ENCODE measurements at regions of chr9 and their contacts with region 1.

Region 1: DNA sequence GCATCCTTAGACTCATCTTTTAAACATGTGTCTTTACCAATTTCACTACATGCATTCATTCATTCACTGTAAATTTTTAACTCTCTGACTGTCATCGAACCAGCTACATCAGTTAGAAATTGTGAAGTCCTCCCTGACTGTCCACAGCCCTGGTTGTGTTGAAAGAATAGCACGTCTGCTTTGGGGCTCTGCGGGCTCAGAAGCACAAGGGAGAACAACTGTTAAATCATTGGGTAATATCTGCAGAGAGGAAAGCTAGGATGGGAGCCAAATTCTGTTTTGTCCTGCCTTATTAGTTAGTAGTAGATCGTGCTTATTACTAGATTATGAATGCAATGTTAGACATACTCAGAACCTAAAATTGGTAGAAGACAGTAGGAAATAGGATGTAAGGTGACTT is 26.3 kb upstream of the FAM120AOS start:
- DNase-seq: no peak
- H3K4me3 ChIP-seq: no peak overlapping the region
- H3K27ac ChIP-seq: no peak overlapping the region
- H3K4me1 ChIP-seq: no peaks in the 10 kb centered on the region
- H3K27me3 ChIP-seq: no peaks in the 10 kb centered on the region
- CTCF ChIP-seq: no peak

Region 2: DNA sequence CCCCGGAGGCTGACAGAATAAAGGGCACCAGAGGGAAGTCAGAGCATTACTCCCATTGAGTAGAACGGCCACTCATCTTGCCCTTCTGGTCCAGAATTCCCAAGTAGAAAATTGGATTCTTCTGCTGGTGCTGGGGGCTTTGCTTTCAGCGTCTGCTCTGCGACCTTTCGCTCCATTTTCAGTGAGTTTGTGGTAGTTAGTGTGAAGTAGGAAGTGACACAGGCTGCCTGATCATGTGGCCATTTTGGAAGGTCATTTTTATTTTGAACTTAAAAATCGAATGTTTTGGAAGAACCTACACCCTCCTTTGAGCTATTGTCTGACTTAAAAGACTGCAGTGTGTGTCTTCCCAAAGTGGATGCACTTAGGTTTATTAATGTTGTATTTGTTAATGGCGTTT is 30.3 kb after region 1 on chr9:
- CTCF ChIA-PET with region 1: no interaction called
- dilution Hi-C with region 1: loop called (anchors 5 kb)
- in situ Hi-C with region 1: no loop called
- intact Hi-C with region 1: no loop called
- DNase-seq: no peak
- H3K4me3 ChIP-seq: no peak overlapping the region
- H3K27ac ChIP-seq: no peak overlapping the region
- H3K4me1 ChIP-seq: no peaks in the 10 kb centered on the region
- H3K27me3 ChIP-seq: no peaks in the 10 kb centered on the region
- CTCF ChIP-seq: no peak

Region 3: DNA sequence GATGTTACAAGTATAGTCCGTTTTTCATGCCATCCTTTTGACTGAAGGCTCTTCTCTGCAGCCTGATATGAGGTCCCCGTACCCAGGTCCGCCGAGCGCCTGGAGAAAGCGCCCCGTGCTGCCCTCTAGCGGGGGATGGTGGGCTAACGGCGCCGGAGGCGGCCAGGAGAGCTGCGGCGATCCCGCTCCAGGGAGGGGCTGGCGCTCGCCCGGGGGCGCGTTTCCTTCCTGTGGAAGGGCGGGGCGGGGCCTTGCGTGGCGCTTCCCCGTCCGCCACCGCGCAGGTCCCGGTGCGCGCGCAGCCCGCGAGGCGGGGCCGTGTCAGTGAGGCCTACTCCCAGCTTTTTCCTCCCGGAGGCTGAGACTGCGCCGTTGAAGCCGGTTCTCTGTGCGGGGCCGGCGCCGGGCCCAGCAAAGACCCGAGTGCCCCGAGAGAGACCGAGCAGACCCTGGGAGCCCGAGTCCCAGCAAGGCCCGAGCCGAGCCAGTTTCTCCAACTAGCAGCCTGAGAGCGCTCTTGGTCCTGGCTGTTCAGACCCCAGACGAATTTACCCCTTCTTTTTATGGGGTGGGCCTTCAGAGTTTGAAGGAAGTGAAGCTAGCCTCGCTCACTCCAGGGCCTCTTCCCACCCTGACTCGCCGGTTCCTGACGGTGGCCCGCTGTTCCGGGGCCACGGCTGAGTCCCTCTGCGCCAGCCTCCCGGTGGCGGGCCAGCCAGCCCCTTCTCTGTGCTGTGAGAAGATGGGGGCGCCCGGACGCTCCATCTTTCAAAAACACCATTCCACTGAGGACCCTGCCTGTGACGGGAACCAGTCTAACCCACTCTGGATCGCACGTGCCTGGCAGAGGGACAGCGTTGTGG is 86.9 kb after region 1 on chr9:
- CTCF ChIA-PET with region 1: no interaction called
- dilution Hi-C with region 1: loop called (anchors 5 kb)
- in situ Hi-C with region 1: no loop called
- intact Hi-C with region 1: no loop called
- DNase-seq: peak; percentile 91
- H3K4me3 ChIP-seq: peak overlapping the region; percentile 47 to 62 (median 53)
- H3K27ac ChIP-seq: peak overlapping the region; percentile 50
- H3K4me1 ChIP-seq: peaks cover 19% of the 10 kb centered on the region
- H3K27me3 ChIP-seq: no peaks in the 10 kb centered on the region
- CTCF ChIP-seq: peak; percentile 72 to 80

Measured in mammary epithelial cell (primary cell).